CD4-positive, alpha-beta T cell (primary cell): ENCODE measurements at regions of chr20 and their contacts with region 1.

Region 1: GRCh38 chr20:57498425-57499400 is 26.2 kb downstream of the CTCFL start:
- DNase-seq: peak in 8 of 14 experiments; percentile 18 to 69 (median 38)
- ATAC-seq: peak; percentile 78
- H3K4me3 ChIP-seq: no peak overlapping the region
- H3K4me3 Mint-ChIP-seq: no peak overlapping the region
- H3K27ac ChIP-seq: no peak overlapping the region
- H3K27ac Mint-ChIP-seq: no peak overlapping the region
- H3K4me1 ChIP-seq: peaks cover 15% of the 10 kb centered on the region
- H3K4me1 Mint-ChIP-seq: peaks cover 13% of the 10 kb centered on the region
- H3K27me3 ChIP-seq: peaks cover 19 to 22% of the 10 kb centered on the region in 2 experiments
- H3K27me3 Mint-ChIP-seq: peaks cover 51% of the 10 kb centered on the region
- CTCF ChIP-seq: peak; percentile 28

Region 2: GRCh38 chr20:56554869-56555268 is 943.8 kb before region 1 on chr20:
- CTCF ChIA-PET with region 1: no interaction called
- POLR2A ChIA-PET with region 1: no interaction called
- intact Hi-C with region 1: loop called in 1 of 2 experiments (anchors 5 kb)
- DNase-seq: peak in 3 of 14 experiments; percentile 16 to 29 (median 23)
- ATAC-seq: no peak
- H3K4me3 ChIP-seq: no peak overlapping the region
- H3K4me3 Mint-ChIP-seq: no peak overlapping the region
- H3K27ac ChIP-seq: no peak overlapping the region
- H3K27ac Mint-ChIP-seq: no peak overlapping the region
- H3K4me1 ChIP-seq: no peaks in the 10 kb centered on the region
- H3K4me1 Mint-ChIP-seq: no peaks in the 10 kb centered on the region
- H3K27me3 ChIP-seq: no peaks in the 10 kb centered on the region
- H3K27me3 Mint-ChIP-seq: no peaks in the 10 kb centered on the region
- CTCF ChIP-seq: no peak

Region 3: DNA sequence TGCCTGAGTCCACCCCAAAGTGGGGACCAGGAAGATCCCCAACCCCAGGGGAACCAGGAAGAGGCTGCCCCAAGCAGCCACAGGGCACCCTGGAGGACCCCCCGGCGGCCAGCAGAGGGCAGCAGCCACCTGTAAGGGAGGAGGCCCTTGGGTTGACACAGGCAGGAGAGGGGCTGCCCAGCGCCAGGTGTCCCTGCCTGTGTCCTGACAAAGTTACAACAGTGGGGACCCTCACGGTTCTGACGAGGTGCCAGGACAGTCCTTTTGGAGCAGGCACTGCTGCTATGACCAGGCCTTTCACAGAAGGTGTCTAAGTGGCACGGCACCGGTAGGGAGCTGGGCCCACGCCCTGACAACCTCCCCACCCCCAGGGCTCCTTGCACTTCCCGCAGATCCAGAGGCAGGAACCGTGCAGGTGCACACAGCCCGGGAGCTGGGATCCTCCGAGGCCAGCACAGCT is 409.0 kb before region 1 on chr20:
- CTCF ChIA-PET with region 1: no interaction called
- POLR2A ChIA-PET with region 1: no interaction called
- intact Hi-C with region 1: loop called (anchors 5 kb)
- DNase-seq: peak; percentile 17 to 66 (median 44)
- ATAC-seq: peak; percentile 64
- H3K4me3 ChIP-seq: no peak overlapping the region
- H3K4me3 Mint-ChIP-seq: no peak overlapping the region
- H3K27ac ChIP-seq: no peak overlapping the region
- H3K27ac Mint-ChIP-seq: no peak overlapping the region
- H3K4me1 ChIP-seq: peaks cover 8% of the 10 kb centered on the region
- H3K4me1 Mint-ChIP-seq: peaks cover 13% of the 10 kb centered on the region
- H3K27me3 ChIP-seq: peaks cover 4% of the 10 kb centered on the region in 2 experiments
- H3K27me3 Mint-ChIP-seq: peaks cover 10% of the 10 kb centered on the region
- CTCF ChIP-seq: peak; percentile 62

Region 4: DNA sequence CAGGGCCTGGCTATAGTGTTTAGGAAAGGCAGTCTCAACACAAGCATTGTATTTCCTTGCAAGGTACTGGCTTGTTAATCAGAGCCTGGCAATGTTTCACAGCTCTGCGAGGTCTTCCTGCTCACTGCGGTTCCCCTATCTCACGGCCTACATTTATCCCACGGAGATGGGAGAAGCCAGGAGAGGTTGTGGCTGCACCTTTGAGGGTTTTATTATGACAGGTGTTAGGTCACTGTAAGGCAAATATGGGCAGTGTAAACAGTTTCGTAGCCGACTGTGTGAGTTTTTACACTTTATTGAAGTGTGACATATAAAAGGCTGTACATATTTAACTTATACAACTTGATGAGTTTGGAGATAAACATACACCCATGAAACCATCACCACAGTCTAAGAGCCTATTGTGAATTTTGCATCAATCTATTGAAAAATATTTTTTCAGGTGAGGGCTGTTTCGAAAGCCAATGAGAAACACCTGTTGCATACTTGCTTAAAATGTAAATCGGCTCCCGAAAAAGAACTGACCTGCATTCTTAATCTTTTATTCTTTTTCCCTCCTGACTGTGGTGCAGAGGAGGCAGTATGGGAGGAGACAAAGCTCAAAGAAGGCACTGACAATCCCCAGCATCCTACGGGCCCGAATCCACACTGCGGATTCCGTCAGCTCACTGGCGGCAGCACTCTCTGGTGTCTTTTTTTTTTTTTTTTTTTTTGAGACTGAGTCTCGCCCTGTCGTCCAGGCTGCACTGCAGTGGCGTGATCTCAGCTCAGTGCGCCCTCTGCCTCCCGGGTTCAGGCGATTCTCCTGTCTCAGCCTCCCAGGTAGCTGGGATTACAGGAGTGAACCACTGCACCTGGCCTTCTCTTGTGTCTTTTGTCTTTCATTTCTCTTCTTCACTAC is 115.0 kb before region 1 on chr20:
- CTCF ChIA-PET with region 1: interaction called, 14 read pairs
- POLR2A ChIA-PET with region 1: no interaction called
- intact Hi-C with region 1: loop called (anchors 1 kb)
- DNase-seq: peak in 1 of 14 experiments; percentile 30
- ATAC-seq: no peak
- H3K4me3 ChIP-seq: no peak overlapping the region
- H3K4me3 Mint-ChIP-seq: no peak overlapping the region
- H3K27ac ChIP-seq: no peak overlapping the region
- H3K27ac Mint-ChIP-seq: no peak overlapping the region
- H3K4me1 ChIP-seq: peaks cover 16% of the 10 kb centered on the region
- H3K4me1 Mint-ChIP-seq: peaks cover 23% of the 10 kb centered on the region
- H3K27me3 ChIP-seq: no peaks in the 10 kb centered on the region
- H3K27me3 Mint-ChIP-seq: no peaks in the 10 kb centered on the region
- CTCF ChIP-seq: no peak

Region 5: DNA sequence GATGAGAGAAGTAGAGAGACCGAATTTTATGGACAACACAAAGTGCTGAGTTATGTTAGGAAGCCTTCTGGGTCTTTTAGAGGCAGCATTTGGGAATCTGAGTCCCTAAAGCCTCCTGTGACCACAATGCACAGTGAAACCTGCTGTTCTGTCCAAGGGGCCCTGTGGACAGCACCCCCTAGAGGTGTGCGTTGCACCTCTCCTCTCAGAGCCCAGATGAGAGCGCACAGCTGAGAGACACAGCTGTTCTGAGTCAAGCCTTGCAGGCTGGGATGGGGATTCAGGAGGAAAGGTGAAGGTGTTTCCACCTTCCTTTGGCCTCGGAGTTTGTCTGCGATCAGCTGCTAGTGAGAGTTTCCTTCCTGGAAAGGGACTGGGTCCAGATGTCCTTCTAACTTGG is 75.2 kb after region 1 on chr20:
- CTCF ChIA-PET with region 1: no interaction called
- POLR2A ChIA-PET with region 1: no interaction called
- intact Hi-C with region 1: no loop called
- DNase-seq: no peak
- ATAC-seq: no peak
- H3K4me3 ChIP-seq: no peak overlapping the region
- H3K4me3 Mint-ChIP-seq: no peak overlapping the region
- H3K27ac ChIP-seq: no peak overlapping the region
- H3K27ac Mint-ChIP-seq: no peak overlapping the region
- H3K4me1 ChIP-seq: no peaks in the 10 kb centered on the region
- H3K4me1 Mint-ChIP-seq: no peaks in the 10 kb centered on the region
- H3K27me3 ChIP-seq: peaks cover 12 to 27% of the 10 kb centered on the region in 2 experiments
- H3K27me3 Mint-ChIP-seq: peaks cover 50% of the 10 kb centered on the region
- CTCF ChIP-seq: no peak